CD4-positive, alpha-beta memory T cell (primary cell): ENCODE measurements at regions of chr19 and their contacts with region 1.

Region 1: GRCh38 chr19:4139614-4140236 is 13.7 kb upstream of the CREB3L3 start:
- DNase-seq: peak; percentile 74 to 80 (median 78)
- H3K4me3 ChIP-seq: no peak overlapping the region
- H3K4me3 Mint-ChIP-seq: peak overlapping the region; percentile 7 to 81 (median 60)
- H3K27ac ChIP-seq: no peak overlapping the region
- H3K27ac Mint-ChIP-seq: peak overlapping the region in 3 of 7 donors; percentile 16 to 59 (median 35)
- H3K4me1 ChIP-seq: peaks cover 9% of the 10 kb centered on the region
- H3K4me1 Mint-ChIP-seq: peaks cover 6 to 13% (median 10%) of the 10 kb centered on the region in 4 donors
- H3K27me3 ChIP-seq: no peaks in the 10 kb centered on the region
- H3K27me3 Mint-ChIP-seq: peaks cover 5 to 6% of the 10 kb centered on the region in 2 donors

Region 2: GRCh38 chr19:4115050-4115817 is 24.5 kb before region 1 on chr19:
- CTCF ChIA-PET with region 1: interaction called, 12 read pairs
- POLR2A ChIA-PET with region 1: interaction called, 4 read pairs
- intact Hi-C with region 1: no loop called
- DNase-seq: peak; percentile 71 to 80 (median 77)
- H3K4me3 ChIP-seq: peak overlapping the region in 1 of 2 donors; percentile 36
- H3K4me3 Mint-ChIP-seq: peak overlapping the region; percentile 5 to 72 (median 64)
- H3K27ac ChIP-seq: peak overlapping the region; percentile 49
- H3K27ac Mint-ChIP-seq: peak overlapping the region; percentile 65 to 92 (median 91)
- H3K4me1 ChIP-seq: peaks cover 34% of the 10 kb centered on the region
- H3K4me1 Mint-ChIP-seq: peaks cover 11 to 42% (median 20%) of the 10 kb centered on the region in 4 donors
- H3K27me3 ChIP-seq: no peaks in the 10 kb centered on the region
- H3K27me3 Mint-ChIP-seq: no peaks in the 10 kb centered on the region

Region 3: DNA sequence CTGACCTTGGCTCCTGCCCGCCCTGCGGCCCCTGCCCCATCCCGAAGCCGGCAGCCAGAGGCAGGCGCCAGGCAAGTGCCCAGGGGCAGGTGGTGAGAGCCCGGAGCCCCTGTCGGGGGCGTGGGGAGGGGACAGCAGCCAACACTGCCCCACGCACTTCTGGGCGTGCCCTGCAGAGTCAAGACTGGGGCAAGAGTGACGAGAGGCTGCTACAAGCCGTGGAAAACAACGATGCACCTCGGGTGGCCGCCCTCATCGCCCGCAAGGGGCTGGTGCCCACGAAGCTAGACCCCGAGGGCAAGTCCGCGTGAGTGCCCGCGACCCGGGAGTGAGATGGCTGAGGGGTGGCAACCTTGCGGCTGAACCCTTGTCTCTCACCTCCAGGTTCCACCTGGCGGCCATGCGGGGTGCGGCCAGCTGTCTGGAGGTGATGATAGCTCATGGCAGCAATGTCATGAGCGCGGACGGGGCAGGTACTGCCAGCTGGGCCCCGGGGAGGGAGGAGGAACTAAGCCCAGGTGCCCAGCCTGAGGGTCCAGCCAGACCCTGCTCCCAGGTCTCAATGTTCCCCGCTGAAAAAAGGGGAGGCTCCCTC is 60.1 kb after region 1 on chr19:
- CTCF ChIA-PET with region 1: interaction called, 11 read pairs
- POLR2A ChIA-PET with region 1: no interaction called
- intact Hi-C with region 1: loop called (anchors 1 kb)
- DNase-seq: no peak
- H3K4me3 ChIP-seq: no peak overlapping the region
- H3K4me3 Mint-ChIP-seq: no peak overlapping the region
- H3K27ac ChIP-seq: no peak overlapping the region
- H3K27ac Mint-ChIP-seq: no peak overlapping the region
- H3K4me1 ChIP-seq: no peaks in the 10 kb centered on the region
- H3K4me1 Mint-ChIP-seq: peaks cover 12 to 16% (median 13%) of the 10 kb centered on the region in 4 donors
- H3K27me3 ChIP-seq: peaks cover 18% of the 10 kb centered on the region
- H3K27me3 Mint-ChIP-seq: peaks cover 12 to 33% of the 10 kb centered on the region in 2 donors

Region 4: GRCh38 chr19:4208385-4209094 is 68.8 kb after region 1 on chr19:
- CTCF ChIA-PET with region 1: no interaction called
- POLR2A ChIA-PET with region 1: no interaction called
- intact Hi-C with region 1: loop called (anchors 1 kb)
- DNase-seq: no peak
- H3K4me3 ChIP-seq: no peak overlapping the region
- H3K4me3 Mint-ChIP-seq: no peak overlapping the region
- H3K27ac ChIP-seq: no peak overlapping the region
- H3K27ac Mint-ChIP-seq: no peak overlapping the region
- H3K4me1 ChIP-seq: no peaks in the 10 kb centered on the region
- H3K4me1 Mint-ChIP-seq: peaks cover 3 to 5% (median 3%) of the 10 kb centered on the region in 4 donors
- H3K27me3 ChIP-seq: no peaks in the 10 kb centered on the region
- H3K27me3 Mint-ChIP-seq: peaks cover 0 to 5% of the 10 kb centered on the region in 2 donors